A549 (cell line): ENCODE measurements at regions of chr11 and their contacts with region 1.

Region 1: DNA sequence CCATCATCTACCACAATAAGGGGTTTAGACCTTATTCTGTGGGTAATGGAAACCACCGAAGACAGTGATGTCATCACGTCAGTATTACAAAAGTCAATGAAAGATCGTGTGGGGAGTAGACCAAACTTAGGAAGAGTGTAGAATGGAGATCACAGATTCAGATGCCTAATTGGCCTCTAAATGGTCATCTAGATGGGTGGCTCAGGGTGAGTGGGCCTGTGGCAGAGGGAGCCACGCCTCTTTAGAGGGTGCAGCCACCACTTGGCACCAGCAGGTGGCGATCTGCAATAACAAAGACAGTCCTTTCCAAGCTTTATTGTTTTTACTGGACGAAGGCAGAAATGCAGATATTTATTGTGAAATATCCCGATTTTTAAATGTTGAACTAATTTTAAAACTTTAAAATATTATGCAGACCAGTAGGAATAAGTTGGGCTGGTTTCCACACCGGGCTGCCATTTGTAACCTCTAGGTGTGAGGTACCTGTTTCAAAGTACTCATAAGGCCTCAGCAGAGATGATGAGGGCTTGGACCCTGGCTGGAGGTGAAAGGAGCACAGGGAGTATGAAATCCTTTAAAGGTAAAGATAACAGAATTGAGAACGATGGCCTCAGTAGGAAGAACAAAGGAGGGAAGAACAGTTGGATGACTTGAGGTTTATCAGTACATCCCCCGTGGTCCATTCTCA is 222.0 kb downstream of the DBX1 start:
- DNase-seq: peak; percentile 63 to 69
- ATAC-seq: peak; percentile 67 to 93; a peak in 5 of 6 replicates
- H3K4me3 ChIP-seq: no peak overlapping the region
- H3K27ac ChIP-seq: peak overlapping the region in 1 of 2 experiments; percentile 35; a peak in 1 of 6 replicates
- H3K4me1 ChIP-seq: peaks cover 12% of the 10 kb centered on the region; the same call in 2 of the 3 replicates
- CTCF ChIP-seq: peak; percentile 90
- EP300 ChIP-seq: no peak
- POLR2A ChIP-seq: no peak
- RAD21 ChIP-seq: peak; percentile 83 to 86

Region 2: DNA sequence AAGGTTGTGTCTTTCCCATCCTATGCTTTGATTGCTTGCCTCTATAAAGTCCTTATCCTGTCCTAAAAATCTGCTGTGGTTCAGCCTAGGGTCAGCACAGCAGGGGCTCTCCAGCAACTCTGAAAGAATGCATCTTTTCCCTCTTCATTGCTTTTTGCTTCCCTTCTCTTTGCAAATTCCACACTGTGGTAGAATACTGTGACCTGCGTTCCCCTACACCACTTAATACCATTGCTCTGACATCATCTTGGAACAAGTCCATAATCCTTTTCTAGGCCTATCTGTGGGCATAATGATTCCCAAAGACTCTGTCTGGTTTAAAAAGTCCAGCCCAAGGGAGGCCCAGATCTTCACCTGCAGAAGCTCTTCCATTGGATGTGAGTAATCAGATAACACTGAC is 48.0 kb before region 1 on chr11:
- CTCF ChIA-PET with region 1: no interaction called
- POLR2A ChIA-PET with region 1: no interaction called
- DNase-seq: peak in 1 of 2 experiments; percentile 8
- ATAC-seq: peak; percentile 13 to 71; a peak in 4 of 6 replicates
- H3K4me3 ChIP-seq: no peak overlapping the region
- H3K27ac ChIP-seq: no peak overlapping the region; a peak in 1 of 6 replicates
- H3K4me1 ChIP-seq: no peaks in the 10 kb centered on the region
- CTCF ChIP-seq: no peak
- EP300 ChIP-seq: no peak
- POLR2A ChIP-seq: no peak
- RAD21 ChIP-seq: no peak

Region 3: DNA sequence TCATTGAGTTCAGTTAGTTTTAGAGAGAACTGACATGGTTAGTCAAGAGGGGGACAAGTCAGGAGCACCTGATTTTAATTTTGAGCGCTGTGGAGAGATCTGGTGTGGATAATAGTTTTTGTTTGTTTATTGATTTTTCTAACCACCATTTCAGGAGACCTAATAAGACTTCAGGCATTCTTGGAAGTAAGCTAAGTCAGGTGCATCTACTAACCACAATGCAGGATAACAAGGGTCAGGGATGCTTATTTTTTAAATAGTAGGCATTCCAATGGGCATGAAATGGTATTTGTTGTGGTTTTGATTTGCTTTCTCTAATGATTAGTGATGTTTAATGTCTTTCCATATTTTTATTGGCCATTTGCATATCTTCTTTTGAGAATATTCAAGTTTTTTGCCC is 13.6 kb before region 1 on chr11:
- CTCF ChIA-PET with region 1: interaction called, 18 read pairs
- POLR2A ChIA-PET with region 1: no interaction called
- DNase-seq: no peak
- ATAC-seq: no peak
- H3K4me3 ChIP-seq: no peak overlapping the region
- H3K27ac ChIP-seq: no peak overlapping the region
- H3K4me1 ChIP-seq: peaks cover 20% of the 10 kb centered on the region
- CTCF ChIP-seq: no peak
- EP300 ChIP-seq: no peak
- POLR2A ChIP-seq: no peak
- RAD21 ChIP-seq: no peak

Region 4: GRCh38 chr11:19995131-19995530 is 56.8 kb after region 1 on chr11:
- CTCF ChIA-PET with region 1: no interaction called
- POLR2A ChIA-PET with region 1: no interaction called
- DNase-seq: peak; percentile 56 to 91
- ATAC-seq: peak; percentile 92 to 97
- H3K4me3 ChIP-seq: no peak overlapping the region
- H3K27ac ChIP-seq: peak overlapping the region; percentile 80 to 99
- H3K4me1 ChIP-seq: peaks cover 35% of the 10 kb centered on the region
- CTCF ChIP-seq: no peak
- EP300 ChIP-seq: peak; percentile 64 to 66; a peak in 3 of 5 replicates
- POLR2A ChIP-seq: no peak
- RAD21 ChIP-seq: no peak; a peak in 1 of 5 replicates

Region 5: GRCh38 chr11:20081336-20081735 is 143.0 kb after region 1 on chr11:
- CTCF ChIA-PET with region 1: no interaction called
- POLR2A ChIA-PET with region 1: no interaction called
- DNase-seq: no peak
- ATAC-seq: no peak
- H3K4me3 ChIP-seq: no peak overlapping the region
- H3K27ac ChIP-seq: no peak overlapping the region
- H3K4me1 ChIP-seq: no peaks in the 10 kb centered on the region
- CTCF ChIP-seq: no peak
- EP300 ChIP-seq: no peak
- POLR2A ChIP-seq: no peak
- RAD21 ChIP-seq: no peak

Region 6: GRCh38 chr11:20355221-20356219 is 417.2 kb after region 1 on chr11:
- CTCF ChIA-PET with region 1: interaction called, 24 read pairs
- POLR2A ChIA-PET with region 1: interaction called, 3 read pairs
- DNase-seq: peak; percentile 52 to 63
- ATAC-seq: peak; percentile 92 to 94
- H3K4me3 ChIP-seq: no peak overlapping the region
- H3K27ac ChIP-seq: no peak overlapping the region
- H3K4me1 ChIP-seq: peaks cover 13% of the 10 kb centered on the region
- CTCF ChIP-seq: peak; percentile 57
- EP300 ChIP-seq: no peak
- POLR2A ChIP-seq: no peak
- RAD21 ChIP-seq: peak; percentile 27 to 35; a peak in 3 of 5 replicates